IMR-90 (cell line): ENCODE measurements at regions of chr2 and their contacts with region 1.

Region 1: DNA sequence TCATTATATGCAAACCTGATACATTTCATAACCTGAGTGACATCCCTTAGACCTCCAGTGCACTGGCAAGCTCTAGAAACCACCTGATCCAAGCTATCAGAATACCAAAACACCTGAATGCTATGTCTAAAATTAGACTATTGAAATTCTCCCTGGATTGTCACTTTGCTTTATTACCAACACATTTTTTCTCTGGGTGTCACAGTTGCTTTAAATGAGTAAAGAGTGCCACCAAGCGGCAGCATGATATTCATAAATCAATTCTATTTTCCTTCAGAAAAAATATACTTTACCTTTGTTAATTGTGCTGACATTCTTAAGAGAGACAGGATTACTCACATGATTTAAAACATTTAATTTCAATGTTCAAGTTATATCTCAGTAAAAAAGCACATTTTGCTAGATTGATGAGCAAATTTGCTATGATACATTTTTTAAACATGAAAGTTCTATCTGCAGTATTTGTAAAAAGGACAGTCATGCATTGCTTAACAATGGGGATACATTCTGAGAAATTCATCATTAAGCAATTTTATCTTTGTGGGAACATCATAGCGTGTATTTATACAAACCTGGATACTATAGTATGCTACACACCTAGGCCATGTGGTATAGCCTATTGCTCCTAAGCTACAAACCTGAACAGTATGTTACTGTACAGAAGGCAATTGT is 338.4 kb upstream of the SLC39A10 start:
- DNase-seq: peak; percentile 37
- ATAC-seq: peak; percentile 52
- H3K4me3 ChIP-seq: no peak overlapping the region
- H3K27ac ChIP-seq: no peak overlapping the region
- H3K4me1 ChIP-seq: peaks cover 4% of the 10 kb centered on the region
- H3K27me3 ChIP-seq: no peaks in the 10 kb centered on the region
- CTCF ChIP-seq: peak; percentile 74
- POLR2A ChIP-seq: no peak
- RAD21 ChIP-seq: peak; percentile 75

Region 2: DNA sequence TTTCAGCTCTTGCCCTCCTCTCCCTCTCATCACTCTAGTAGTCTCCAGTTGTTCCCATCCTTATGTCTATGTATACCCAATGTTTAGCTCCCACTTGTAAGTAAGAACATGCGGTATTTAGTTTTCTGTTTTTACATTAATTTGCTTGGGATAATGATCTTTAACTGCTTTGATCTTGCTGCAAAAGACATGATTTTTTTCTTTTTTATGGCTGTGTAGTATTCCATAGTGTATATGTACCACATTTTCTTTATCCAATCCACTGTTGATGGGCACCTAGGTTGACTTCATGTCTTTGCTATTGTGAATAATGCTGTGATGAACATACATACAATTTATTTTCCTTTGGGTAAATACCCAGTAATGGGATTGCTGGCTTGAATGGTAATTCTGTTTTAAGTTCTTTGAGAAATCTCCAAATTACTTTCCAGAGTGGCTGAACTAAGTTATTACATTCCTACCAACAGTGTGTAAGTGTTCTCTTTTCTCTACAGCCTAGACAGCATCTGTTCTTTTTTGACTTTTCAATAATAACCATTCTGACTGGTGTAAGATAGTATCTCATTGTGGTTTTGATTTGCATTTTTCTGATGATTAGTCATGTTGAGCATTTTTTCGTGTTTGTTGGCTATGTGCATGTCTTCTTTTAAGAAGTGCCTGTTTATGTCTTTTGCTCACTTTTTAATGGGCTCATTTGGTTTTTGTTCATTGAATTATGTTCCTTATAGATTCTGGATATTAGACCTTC is 158.8 kb after region 1 on chr2:
- CTCF ChIA-PET with region 1: no interaction called
- POLR2A ChIA-PET with region 1: no interaction called
- dilution Hi-C with region 1: no loop called
- in situ Hi-C with region 1: no loop called
- intact Hi-C with region 1: loop called (anchors 10 kb)
- DNase-seq: peak; percentile 87
- ATAC-seq: peak; percentile 96
- H3K4me3 ChIP-seq: no peak overlapping the region
- H3K27ac ChIP-seq: no peak overlapping the region
- H3K4me1 ChIP-seq: peaks cover 2% of the 10 kb centered on the region; the same call in 1 of the 2 replicates
- H3K27me3 ChIP-seq: no peaks in the 10 kb centered on the region
- CTCF ChIP-seq: no peak
- POLR2A ChIP-seq: no peak
- RAD21 ChIP-seq: no peak